ENCODE measurements at regions of chr10 and their contacts with region 1.

Region 1: GRCh38 chr10:86936661-86937501 is 20.5 kb downstream of the MMRN2 start:
- DNase-seq: no peak
- H3K4me3 ChIP-seq: no peak overlapping the region
- H3K4me3 Mint-ChIP-seq: no peak overlapping the region
- H3K27ac ChIP-seq: no peak overlapping the region
- H3K27ac Mint-ChIP-seq: peak overlapping the region in 3 of 7 donors; percentile 29 to 43 (median 42)
- H3K4me1 ChIP-seq: no peaks in the 10 kb centered on the region
- H3K4me1 Mint-ChIP-seq: peaks cover 0 to 7% (median 3%) of the 10 kb centered on the region in 4 donors
- H3K27me3 ChIP-seq: no peaks in the 10 kb centered on the region
- H3K27me3 Mint-ChIP-seq: no peaks in the 10 kb centered on the region

Region 2: DNA sequence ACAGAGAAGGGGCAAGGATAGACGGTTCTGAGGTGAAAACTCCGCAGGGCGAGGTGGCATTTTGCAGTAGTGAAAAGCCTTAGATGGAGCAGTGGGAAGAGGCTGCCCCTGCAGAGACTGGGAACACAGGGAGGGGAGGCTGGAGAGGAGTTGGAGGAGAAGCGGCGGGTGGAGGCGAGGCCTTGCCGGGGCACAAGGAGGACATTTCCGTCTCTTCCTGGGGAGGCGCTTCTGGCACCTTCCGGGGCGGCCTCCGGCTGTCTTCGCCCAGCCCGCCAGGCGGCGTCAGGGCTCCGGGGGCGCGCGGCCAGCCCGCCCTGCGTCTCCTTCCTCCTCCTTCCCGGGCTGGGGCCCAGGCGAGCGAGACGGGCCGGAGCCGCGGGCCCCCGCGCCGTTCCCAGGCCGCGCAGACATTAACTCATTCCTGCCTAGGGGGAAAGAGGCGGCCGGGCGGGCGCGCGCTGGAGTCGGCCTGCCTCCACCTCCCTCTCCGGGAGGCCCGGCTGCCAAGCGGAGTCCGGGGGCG is 225.8 kb before region 1 on chr10:
- CTCF ChIA-PET with region 1: no interaction called
- POLR2A ChIA-PET with region 1: no interaction called
- intact Hi-C with region 1: loop called (anchors 1 kb)
- DNase-seq: peak; percentile 81 to 88 (median 87)
- H3K4me3 ChIP-seq: peak overlapping the region in 1 of 2 donors; percentile 64
- H3K4me3 Mint-ChIP-seq: peak overlapping the region; percentile 81 to 96 (median 92)
- H3K27ac ChIP-seq: peak overlapping the region; percentile 75
- H3K27ac Mint-ChIP-seq: peak overlapping the region; percentile 87 to 97 (median 96)
- H3K4me1 ChIP-seq: peaks cover 15% of the 10 kb centered on the region
- H3K4me1 Mint-ChIP-seq: peaks cover 7 to 21% (median 14%) of the 10 kb centered on the region in 4 donors
- H3K27me3 ChIP-seq: no peaks in the 10 kb centered on the region
- H3K27me3 Mint-ChIP-seq: no peaks in the 10 kb centered on the region

Region 3: DNA sequence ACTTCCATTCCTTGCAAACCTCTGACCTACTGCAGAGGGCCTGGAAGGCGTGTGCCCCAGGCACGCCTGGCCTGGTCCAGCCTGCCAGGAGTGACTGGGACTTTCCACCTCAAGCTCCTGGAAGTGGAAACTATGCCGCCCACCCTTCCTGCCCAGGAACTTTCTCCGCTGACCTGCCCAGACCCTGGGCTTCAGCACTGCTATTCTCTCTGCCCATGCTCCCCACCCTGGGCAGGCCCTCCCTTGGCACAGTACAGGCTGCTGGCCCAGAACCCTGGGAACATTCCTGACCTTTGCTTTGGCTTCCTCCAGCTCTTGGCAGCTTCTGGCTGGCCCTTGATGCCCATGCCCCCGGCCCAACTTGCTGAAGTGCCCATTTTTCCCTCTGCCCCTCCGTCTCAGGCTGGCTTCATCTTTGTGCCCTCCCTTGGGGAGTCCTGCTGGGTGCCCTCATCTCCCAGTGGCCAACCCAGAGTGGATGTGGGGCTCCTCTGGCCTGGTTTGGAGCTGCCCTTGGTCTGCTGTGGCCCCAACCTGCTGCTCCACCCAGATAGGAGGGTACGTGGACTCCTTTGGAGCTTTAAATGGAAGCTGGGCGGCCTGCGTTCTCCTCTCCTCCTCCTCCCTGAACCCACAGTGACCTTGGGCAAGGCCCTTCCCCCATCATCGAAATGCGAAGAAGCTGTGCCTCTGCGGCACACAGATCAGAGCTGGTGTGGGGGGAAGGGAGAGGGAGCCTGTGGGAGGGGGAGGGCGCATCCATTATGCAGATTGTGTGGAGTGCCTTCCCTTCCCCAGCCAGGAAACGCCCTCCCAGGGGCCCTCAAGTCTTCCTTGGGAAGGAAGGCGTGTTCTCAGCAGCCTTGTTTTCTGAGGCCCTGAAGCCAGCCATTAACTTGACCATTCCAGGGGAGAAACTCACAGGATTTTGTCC is 17.1 kb after region 1 on chr10:
- CTCF ChIA-PET with region 1: interaction called, 35 read pairs
- POLR2A ChIA-PET with region 1: interaction called, 4 read pairs
- intact Hi-C with region 1: no loop called
- DNase-seq: no peak
- H3K4me3 ChIP-seq: no peak overlapping the region
- H3K4me3 Mint-ChIP-seq: no peak overlapping the region
- H3K27ac ChIP-seq: no peak overlapping the region
- H3K27ac Mint-ChIP-seq: peak overlapping the region in 2 of 7 donors; percentile 22 to 42
- H3K4me1 ChIP-seq: peaks cover 21% of the 10 kb centered on the region
- H3K4me1 Mint-ChIP-seq: peaks cover 10 to 24% (median 15%) of the 10 kb centered on the region in 4 donors
- H3K27me3 ChIP-seq: no peaks in the 10 kb centered on the region
- H3K27me3 Mint-ChIP-seq: no peaks in the 10 kb centered on the region

Region 4: GRCh38 chr10:86965986-86966654 is 29.2 kb after region 1 on chr10:
- CTCF ChIA-PET with region 1: interaction called, 97 read pairs
- POLR2A ChIA-PET with region 1: interaction called, 4 read pairs
- intact Hi-C with region 1: loop called (anchors 1 kb)
- DNase-seq: no peak
- H3K4me3 ChIP-seq: peak overlapping the region in 1 of 2 donors; percentile 23
- H3K4me3 Mint-ChIP-seq: peak overlapping the region; percentile 56 to 86 (median 80)
- H3K27ac ChIP-seq: no peak overlapping the region
- H3K27ac Mint-ChIP-seq: peak overlapping the region; percentile 59 to 87 (median 86)
- H3K4me1 ChIP-seq: peaks cover 46% of the 10 kb centered on the region
- H3K4me1 Mint-ChIP-seq: peaks cover 20 to 52% (median 29%) of the 10 kb centered on the region in 4 donors
- H3K27me3 ChIP-seq: no peaks in the 10 kb centered on the region
- H3K27me3 Mint-ChIP-seq: no peaks in the 10 kb centered on the region

Region 5: DNA sequence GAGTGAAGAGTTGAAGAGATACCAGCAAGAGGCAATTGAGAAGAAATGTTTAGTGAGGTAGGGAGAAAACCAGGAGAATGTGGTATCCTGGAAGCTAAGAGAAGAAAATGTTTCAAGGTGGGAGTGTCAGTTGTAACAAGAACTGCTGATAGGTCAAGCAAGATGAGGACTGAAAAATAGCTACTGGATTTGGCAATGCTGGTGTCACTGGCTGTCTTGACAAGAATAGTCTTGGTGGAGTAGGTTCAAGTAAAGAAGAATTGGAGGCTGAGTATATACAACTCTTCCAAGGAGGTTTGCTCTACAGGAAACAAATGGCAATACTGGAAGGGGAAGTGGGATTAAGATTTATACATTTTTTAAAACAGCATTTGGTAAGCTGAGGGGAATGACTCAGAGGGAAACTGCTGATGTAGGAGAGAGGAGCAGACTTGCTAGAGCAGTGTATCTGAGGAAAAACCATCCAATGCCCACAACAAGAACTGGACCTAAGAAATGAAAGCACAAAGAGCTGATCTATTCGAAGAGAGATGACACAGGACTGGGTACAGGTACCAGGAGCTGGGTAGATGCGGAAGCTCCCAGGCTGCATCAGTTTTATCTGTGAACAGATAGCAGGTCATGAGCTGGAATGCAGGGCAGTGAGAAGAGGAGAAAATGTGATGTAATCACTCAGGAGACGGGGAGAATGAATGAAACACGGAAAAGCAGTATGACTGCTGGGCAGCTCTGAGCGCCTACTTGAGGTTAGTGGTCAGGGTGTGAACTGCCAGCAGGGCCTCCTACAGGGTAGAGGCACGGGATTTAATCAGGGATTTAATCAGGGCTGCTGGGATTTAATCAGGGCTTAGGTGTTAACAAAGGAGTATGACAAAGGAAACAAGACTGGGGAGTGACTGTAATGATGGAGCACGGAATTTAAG is 117.8 kb after region 1 on chr10:
- CTCF ChIA-PET with region 1: no interaction called
- POLR2A ChIA-PET with region 1: no interaction called
- intact Hi-C with region 1: loop called (anchors 5 kb)
- DNase-seq: no peak
- H3K4me3 ChIP-seq: no peak overlapping the region
- H3K4me3 Mint-ChIP-seq: no peak overlapping the region
- H3K27ac ChIP-seq: no peak overlapping the region
- H3K27ac Mint-ChIP-seq: no peak overlapping the region
- H3K4me1 ChIP-seq: no peaks in the 10 kb centered on the region
- H3K4me1 Mint-ChIP-seq: no peaks in the 10 kb centered on the region
- H3K27me3 ChIP-seq: no peaks in the 10 kb centered on the region
- H3K27me3 Mint-ChIP-seq: no peaks in the 10 kb centered on the region

Measured in CD4-positive, alpha-beta memory T cell (primary cell).